ENCODE measurements at regions of chr4 and their contacts with region 1.

Region 1: GRCh38 chr4:98688411-98689290 is 30.2 kb upstream of the TSPAN5 start:
- DNase-seq: peak; percentile 53 to 68 (median 65)
- H3K4me3 ChIP-seq: no peak overlapping the region
- H3K4me3 Mint-ChIP-seq: peak overlapping the region; percentile 22 to 86 (median 70)
- H3K27ac ChIP-seq: peak overlapping the region; percentile 1
- H3K27ac Mint-ChIP-seq: peak overlapping the region; percentile 66 to 91 (median 77)
- H3K4me1 ChIP-seq: peaks cover 32% of the 10 kb centered on the region
- H3K4me1 Mint-ChIP-seq: peaks cover 41 to 58% (median 48%) of the 10 kb centered on the region in 4 donors
- H3K27me3 ChIP-seq: no peaks in the 10 kb centered on the region
- H3K27me3 Mint-ChIP-seq: no peaks in the 10 kb centered on the region

Region 2: DNA sequence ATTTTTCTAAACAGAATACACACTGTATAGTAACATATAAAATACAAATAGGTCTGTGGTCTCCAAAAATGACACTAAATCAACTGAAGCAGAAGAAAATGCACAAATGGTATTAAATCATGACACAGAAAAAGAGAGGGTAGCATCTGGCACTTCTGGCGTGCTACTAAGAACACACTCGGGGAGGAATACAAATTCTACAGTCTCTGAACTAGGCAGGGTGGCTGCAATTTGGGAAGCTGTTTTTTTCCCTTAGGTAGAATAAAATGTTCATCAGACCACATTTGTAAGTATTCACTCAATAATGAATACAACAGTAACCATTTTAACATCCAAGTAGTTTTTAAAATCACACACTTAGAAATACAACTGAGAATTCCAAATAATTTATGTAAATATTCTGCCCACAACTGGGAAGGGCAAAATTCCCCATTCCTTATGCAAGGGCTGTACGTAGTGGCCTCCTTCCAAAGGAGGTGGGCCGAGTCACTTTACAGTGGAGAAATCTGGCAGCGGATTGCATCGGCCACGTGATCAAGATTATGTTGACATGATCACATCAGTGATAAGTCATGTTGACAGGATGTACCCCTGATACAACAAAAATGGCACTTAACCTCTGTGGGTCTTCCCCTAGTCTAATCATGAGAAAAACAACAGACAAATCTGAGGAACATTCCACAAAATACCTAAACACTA is 131.3 kb before region 1 on chr4:
- CTCF ChIA-PET with region 1: no interaction called
- POLR2A ChIA-PET with region 1: no interaction called
- intact Hi-C with region 1: no loop called
- DNase-seq: no peak
- H3K4me3 ChIP-seq: no peak overlapping the region
- H3K4me3 Mint-ChIP-seq: no peak overlapping the region
- H3K27ac ChIP-seq: no peak overlapping the region
- H3K27ac Mint-ChIP-seq: peak overlapping the region in 3 of 7 donors; percentile 7 to 76 (median 17)
- H3K4me1 ChIP-seq: no peaks in the 10 kb centered on the region
- H3K4me1 Mint-ChIP-seq: peaks cover 12 to 20% (median 20%) of the 10 kb centered on the region in 4 donors
- H3K27me3 ChIP-seq: no peaks in the 10 kb centered on the region
- H3K27me3 Mint-ChIP-seq: no peaks in the 10 kb centered on the region

Region 3: DNA sequence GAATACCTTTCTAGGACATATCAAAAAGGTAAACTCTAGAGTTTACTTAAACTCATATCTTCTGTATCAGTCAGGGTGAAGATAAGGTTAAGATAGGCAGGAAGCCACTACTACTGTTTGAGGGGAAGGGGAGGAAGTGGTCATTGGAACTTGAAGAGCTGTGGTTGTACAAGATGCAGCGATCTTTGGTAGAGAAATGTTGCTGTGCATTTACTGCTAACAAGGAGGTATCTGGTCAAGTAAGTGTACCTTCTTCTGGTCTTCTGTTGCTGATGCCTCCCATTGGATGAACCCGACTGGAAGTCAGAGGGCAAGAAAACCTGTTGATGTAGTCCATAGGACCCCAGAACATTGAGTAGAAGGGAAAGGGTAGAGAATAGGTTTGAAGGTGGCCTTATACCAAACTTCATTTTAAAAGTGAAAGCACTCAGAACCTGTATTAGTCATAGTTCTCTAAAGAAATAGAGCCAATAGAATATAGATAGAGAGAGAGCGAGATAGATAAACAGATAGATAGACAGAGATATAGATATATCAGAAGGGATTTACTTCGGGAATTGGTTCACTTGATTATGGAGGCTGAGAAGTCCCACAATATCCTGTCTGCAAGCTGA is 17.7 kb after region 1 on chr4:
- CTCF ChIA-PET with region 1: no interaction called
- POLR2A ChIA-PET with region 1: interaction called, 12 read pairs
- intact Hi-C with region 1: loop called (anchors 1 kb)
- DNase-seq: peak; percentile 72 to 84 (median 78)
- H3K4me3 ChIP-seq: peak overlapping the region; percentile 12 to 34
- H3K4me3 Mint-ChIP-seq: peak overlapping the region; percentile 78 to 95 (median 88)
- H3K27ac ChIP-seq: peak overlapping the region; percentile 32
- H3K27ac Mint-ChIP-seq: peak overlapping the region; percentile 77 to 96 (median 92)
- H3K4me1 ChIP-seq: peaks cover 36% of the 10 kb centered on the region
- H3K4me1 Mint-ChIP-seq: peaks cover 33 to 49% (median 38%) of the 10 kb centered on the region in 4 donors
- H3K27me3 ChIP-seq: no peaks in the 10 kb centered on the region
- H3K27me3 Mint-ChIP-seq: no peaks in the 10 kb centered on the region

Region 4: GRCh38 chr4:98935633-98936032 is 247.0 kb after region 1 on chr4:
- CTCF ChIA-PET with region 1: no interaction called
- POLR2A ChIA-PET with region 1: no interaction called
- intact Hi-C with region 1: no loop called
- DNase-seq: no peak
- H3K4me3 ChIP-seq: no peak overlapping the region
- H3K4me3 Mint-ChIP-seq: no peak overlapping the region
- H3K27ac ChIP-seq: no peak overlapping the region
- H3K27ac Mint-ChIP-seq: no peak overlapping the region
- H3K4me1 ChIP-seq: peaks cover under 1% of the 10 kb centered on the region
- H3K4me1 Mint-ChIP-seq: peaks cover 3 to 12% (median 6%) of the 10 kb centered on the region in 4 donors
- H3K27me3 ChIP-seq: no peaks in the 10 kb centered on the region
- H3K27me3 Mint-ChIP-seq: no peaks in the 10 kb centered on the region